ENCODE measurements at regions of chr14 and their contacts with region 1.

Region 1: GRCh38 chr14:102524466-102525218 is 15.1 kb upstream of the ANKRD9 start:
- DNase-seq: peak; percentile 99 to 100
- ATAC-seq: peak; percentile 98 to 100 (median 99)
- H3K4me3 ChIP-seq: peak overlapping the region; percentile 29 to 81 (median 64)
- H3K27ac ChIP-seq: peak overlapping the region; percentile 42 to 93 (median 86)
- H3K4me1 ChIP-seq: peaks cover 0 to 28% (median 10%) of the 10 kb centered on the region in 9 donors
- H3K27me3 ChIP-seq: no peaks in the 10 kb centered on the region
- CTCF ChIP-seq: peak; percentile 93 to 100 (median 99)

Region 2: DNA sequence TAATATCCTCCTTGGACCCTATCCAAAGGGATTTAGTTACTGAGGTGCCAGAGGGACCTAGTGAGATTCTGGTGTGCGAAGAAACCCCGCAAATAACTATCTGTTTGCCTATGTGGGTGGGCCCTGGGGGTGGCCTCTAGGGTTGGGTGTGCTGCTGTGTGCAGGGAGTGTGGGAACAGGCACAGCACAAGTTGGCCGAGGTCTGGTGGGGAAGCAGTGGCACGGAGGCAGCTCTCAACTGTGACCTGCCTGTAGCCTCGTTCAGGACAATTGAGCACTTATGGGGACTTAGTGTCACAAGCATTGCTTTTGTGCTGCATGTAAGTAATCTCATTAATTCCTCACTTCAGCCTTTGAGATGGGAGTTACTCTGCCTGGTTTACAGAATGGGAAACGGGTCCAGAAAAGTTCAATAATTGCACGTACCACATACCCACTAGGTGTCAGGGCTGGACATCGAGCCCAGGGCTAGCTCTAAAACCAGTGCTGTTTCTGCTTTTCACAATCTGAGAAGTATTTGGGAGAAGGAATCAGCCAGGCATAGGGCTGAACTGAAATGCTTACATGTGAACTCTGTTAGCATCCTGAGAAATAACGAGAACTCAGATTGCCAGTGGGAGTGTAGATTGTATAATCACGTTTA is 103.1 kb before region 1 on chr14:
- intact Hi-C with region 1: no loop called
- DNase-seq: no peak
- ATAC-seq: no peak
- H3K4me3 ChIP-seq: no peak overlapping the region
- H3K27ac ChIP-seq: no peak overlapping the region
- H3K4me1 ChIP-seq: no peaks in the 10 kb centered on the region
- H3K27me3 ChIP-seq: no peaks in the 10 kb centered on the region
- CTCF ChIP-seq: no peak

Region 3: GRCh38 chr14:102591889-102592763 is 67.5 kb after region 1 on chr14 and contains the start of gene RCOR1:
- intact Hi-C with region 1: loop called in 7 of 10 experiments (anchors 1 to 5 kb)
- DNase-seq: peak; percentile 98
- ATAC-seq: peak; percentile 94 to 97 (median 96)
- H3K4me3 ChIP-seq: peak within 1 kb of the TSS; percentile 69 to 98 (median 93)
- H3K27ac ChIP-seq: peak within 1 kb of the TSS; percentile 87 to 100 (median 98)
- H3K4me1 ChIP-seq: peaks cover 0 to 36% (median 29%) of the 10 kb centered on the region in 9 donors
- H3K27me3 ChIP-seq: no peaks in the 10 kb centered on the region
- CTCF ChIP-seq: no peak
- total RNA-seq, gene RCOR1: 11.1 to 16.9 (median 13.2) TPM

Region 4: DNA sequence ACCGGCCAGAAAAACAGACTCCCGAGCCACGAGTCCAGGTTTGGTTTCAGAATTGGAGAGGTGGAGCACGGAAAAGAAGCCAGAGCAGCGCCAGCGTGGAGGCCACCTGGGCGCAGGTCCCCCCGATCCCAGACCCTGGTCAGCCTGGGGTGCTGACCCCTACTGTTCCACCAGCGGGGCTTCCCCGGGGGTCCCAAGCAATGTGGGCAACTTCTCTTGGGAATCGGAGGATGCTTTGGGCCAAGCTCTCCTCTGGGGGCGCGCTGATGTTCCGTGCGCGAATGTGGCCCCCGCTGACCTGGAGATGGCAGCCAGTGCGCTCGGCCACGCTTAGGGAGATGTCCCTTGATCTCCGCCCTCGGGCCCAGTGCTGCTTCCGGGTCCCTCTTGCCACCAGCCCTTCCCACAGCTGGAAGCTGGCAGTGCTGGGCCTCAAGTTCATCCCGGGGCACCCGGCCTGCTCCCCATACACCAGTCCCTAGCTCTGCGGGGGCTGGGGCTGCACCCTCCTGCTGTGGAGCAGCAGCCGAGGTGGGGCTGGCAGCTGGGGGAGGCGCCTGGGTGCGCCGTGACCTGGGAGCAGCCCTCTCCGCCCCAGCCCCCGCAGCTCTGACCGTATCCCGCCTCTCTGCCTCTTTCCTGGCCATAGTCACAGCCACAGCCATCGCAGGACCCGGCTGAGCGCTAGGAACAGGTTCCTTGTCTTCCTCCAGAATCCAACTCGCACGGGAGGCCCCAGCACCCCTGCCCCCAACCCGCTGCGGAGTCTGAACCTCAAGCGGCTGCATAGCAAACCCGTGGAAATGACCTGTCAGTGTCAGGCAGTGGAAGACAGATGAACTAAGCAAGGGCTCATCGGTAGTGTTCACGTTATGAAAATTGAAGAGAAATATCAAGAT is 159.0 kb after region 1 on chr14:
- intact Hi-C with region 1: loop called in 1 of 10 experiments (anchors 10 kb)
- DNase-seq: no peak
- ATAC-seq: peak in 2 of 8 donors; percentile 16 to 61
- H3K4me3 ChIP-seq: no peak overlapping the region
- H3K27ac ChIP-seq: no peak overlapping the region
- H3K4me1 ChIP-seq: peaks cover 0 to 13% (median 0%) of the 10 kb centered on the region in 9 donors
- H3K27me3 ChIP-seq: no peaks in the 10 kb centered on the region
- CTCF ChIP-seq: no peak

Region 5: DNA sequence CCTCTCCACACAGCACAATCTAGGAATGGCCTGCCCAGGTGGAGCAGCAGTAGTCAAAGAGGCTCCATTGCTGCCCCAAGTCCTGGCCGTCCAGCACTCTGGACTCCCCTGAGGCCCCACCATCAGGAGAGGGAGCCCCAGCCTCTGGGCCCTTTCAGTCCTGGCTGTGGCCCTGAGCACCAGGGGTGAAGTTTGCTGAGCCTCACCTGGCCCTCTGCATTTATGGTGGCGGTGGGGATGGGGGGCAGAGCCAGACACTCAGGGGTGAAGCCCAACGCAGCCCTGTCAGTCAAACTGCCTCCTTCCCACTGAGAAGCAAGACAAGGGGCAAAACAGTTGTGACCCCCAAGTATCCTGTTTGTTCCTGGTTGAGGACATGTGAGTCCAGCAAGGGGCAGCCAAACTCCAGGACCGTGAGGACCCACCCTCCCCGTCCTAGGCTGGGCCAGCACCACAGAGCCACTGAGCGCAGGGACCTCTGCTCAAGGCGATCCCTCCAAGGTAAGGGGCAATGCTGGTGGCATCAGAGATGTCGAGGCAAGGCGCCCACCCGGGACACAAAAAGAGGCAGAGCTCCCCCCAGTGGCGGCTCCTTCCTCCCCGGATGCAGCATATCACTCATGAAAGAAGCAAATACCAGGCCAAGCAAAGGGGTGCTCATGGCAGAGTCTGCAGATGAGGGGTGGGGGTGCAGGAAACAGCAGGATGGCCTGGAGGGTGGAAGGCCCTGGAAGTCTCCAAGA is 393.0 kb after region 1 on chr14:
- intact Hi-C with region 1: loop called in 1 of 10 experiments (anchors 5 kb)
- DNase-seq: peak; percentile 49 to 63
- ATAC-seq: peak in 5 of 8 donors; percentile 35 to 63 (median 46)
- H3K4me3 ChIP-seq: no peak overlapping the region
- H3K27ac ChIP-seq: no peak overlapping the region
- H3K4me1 ChIP-seq: peaks cover 0 to 3% (median under 1%) of the 10 kb centered on the region in 9 donors
- H3K27me3 ChIP-seq: peaks cover 0 to 17% (median 9%) of the 10 kb centered on the region in 7 donors
- CTCF ChIP-seq: peak; percentile 24 to 74 (median 67)

Measured in heart right ventricle (tissue), 16 donors.